HCT116 (cell line): ENCODE measurements at regions of chr4 and their contacts with region 1.

Region 1: DNA sequence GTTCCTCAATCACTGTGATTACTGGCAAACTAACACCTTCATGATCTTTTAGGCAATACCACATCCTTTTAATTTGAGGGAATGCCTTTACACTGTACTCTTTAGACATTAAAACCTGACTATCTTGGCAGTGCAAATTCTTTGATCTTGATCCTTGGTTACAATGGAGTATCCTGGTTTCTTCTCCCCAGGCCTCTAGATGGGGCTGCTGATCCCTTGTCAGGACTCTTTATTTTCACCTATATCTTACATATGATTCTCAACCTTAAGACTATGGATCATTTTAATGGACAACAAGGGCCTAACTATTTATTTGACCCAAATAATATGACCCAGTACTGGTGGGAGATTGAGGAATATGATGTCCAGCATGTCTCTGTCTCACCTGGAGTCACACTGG is 1005.5 kb upstream of the INTU start:
- DNase-seq: peak; percentile 8
- ATAC-seq: peak; percentile 78
- H3K4me3 ChIP-seq: no peak overlapping the region
- H3K27ac ChIP-seq: no peak overlapping the region
- H3K4me1 ChIP-seq: no peaks in the 10 kb centered on the region
- H3K27me3 ChIP-seq: no peaks in the 10 kb centered on the region
- CTCF ChIP-seq: peak; percentile 32 to 69 (median 62); a peak in 5 of 6 replicates
- POLR2A ChIP-seq: no peak
- RAD21 ChIP-seq: peak; percentile 60

Region 2: DNA sequence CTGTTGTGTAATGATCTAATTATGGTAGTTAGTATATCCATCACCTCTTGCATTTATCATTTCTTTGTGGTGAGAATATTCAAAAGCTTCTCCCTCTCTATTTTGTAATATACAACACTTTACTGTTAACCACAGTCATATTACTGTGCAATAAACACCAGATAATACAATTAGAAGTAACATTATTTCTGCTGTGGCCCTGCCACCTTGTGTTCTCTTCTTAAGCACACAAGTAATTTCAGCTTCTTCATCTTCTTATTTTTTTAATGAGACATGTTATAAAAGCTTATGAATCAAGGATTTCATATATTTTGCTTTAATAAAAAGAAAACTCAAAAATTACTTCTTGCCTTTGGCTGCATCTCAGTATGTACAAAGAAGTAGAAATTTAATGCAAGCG is 330.3 kb after region 1 on chr4:
- CTCF ChIA-PET with region 1: no interaction called
- POLR2A ChIA-PET with region 1: no interaction called
- RAD21 ChIA-PET with region 1: no interaction called
- intact Hi-C with region 1: loop called (anchors 10 kb)
- DNase-seq: no peak
- ATAC-seq: no peak
- H3K4me3 ChIP-seq: no peak overlapping the region
- H3K27ac ChIP-seq: no peak overlapping the region
- H3K4me1 ChIP-seq: no peaks in the 10 kb centered on the region
- H3K27me3 ChIP-seq: no peaks in the 10 kb centered on the region
- CTCF ChIP-seq: peak in 2 of 3 experiments; percentile 15 to 27; a peak in 1 of 6 replicates
- POLR2A ChIP-seq: no peak
- RAD21 ChIP-seq: peak; percentile 51

Region 3: DNA sequence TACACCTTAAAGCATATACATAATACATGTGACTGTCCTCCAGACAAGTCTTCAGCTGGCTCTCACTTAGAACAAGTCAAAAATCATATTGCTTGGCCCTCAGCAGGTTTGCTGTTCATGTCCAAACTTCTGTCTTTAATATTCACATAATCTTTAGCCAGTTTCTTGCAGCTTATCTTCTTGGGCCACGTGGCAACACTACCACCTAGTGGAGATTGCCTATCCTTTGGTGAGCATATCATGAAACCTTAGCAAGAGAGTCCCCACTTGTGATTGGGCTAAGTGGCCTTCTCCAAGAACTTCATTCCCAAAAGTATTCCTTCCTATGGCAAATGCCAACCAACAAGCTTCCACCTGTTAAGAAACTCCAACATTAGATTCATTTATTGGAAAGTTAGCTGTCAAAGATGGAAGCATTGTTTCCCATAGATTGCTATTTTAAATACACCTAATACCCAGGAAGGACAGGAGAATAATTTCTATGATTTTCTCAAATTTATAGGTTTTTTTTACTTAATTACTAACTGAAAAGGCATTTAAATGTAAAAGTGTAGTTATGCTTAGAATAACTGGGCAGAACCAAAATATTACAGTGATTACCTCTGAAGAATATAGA is 773.6 kb after region 1 on chr4:
- CTCF ChIA-PET with region 1: no interaction called
- POLR2A ChIA-PET with region 1: no interaction called
- RAD21 ChIA-PET with region 1: no interaction called
- intact Hi-C with region 1: loop called (anchors 1 kb)
- DNase-seq: peak; percentile 73
- ATAC-seq: peak; percentile 90
- H3K4me3 ChIP-seq: no peak overlapping the region
- H3K27ac ChIP-seq: no peak overlapping the region
- H3K4me1 ChIP-seq: no peaks in the 10 kb centered on the region
- H3K27me3 ChIP-seq: no peaks in the 10 kb centered on the region
- CTCF ChIP-seq: peak; percentile 40 to 90 (median 84); a peak in 5 of 6 replicates
- POLR2A ChIP-seq: no peak
- RAD21 ChIP-seq: peak; percentile 84